ENCODE measurements at regions of chrX and their contacts with region 1.

Region 1: DNA sequence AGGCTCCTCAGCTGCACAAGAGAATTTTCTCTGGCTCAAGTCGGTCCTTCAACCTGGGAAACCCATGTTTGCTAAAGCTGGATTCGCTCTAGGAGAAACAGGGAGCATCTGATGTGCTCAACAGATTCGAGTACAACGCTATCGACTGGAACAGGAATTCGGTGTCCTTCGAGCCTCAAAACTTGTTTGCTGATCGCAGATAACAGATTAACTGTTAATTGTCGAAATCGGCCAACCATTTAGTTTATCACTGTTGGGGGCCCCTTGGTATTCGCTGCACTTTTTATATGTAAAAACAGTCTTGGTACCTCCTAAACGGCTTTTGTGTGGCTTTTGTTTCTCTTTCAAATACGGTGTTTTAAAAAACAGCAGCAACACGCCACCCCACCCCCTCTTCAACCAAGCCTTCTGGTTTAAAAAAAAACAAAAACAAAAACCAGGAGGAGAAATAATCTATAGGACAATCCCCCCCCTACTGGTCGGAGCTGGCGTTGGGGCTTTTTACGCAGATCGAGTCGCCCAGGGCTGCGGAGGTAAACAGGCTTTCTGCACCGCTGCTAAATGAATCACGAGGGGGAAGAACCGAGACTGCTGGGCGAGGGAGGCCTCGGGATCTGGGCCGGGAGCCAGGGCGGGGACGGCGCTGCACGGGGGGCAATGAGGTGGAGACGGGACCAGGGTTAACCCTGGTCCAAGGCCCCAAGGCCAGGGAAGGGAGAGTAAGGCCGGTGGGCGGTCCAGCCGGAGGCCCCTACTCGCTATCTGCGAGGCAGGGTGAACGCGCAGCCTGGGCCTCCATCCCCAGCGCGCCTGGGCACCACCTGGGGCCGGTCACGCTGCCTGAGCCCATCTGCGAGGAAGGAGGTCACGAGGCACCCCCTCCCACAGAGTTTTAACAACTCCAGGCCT is 71.7 kb upstream of the BCOR start:
- DNase-seq: peak; percentile 90
- H3K4me3 Mint-ChIP-seq: peak overlapping the region; percentile 90
- H3K27ac Mint-ChIP-seq: peak overlapping the region; percentile 100
- H3K4me1 Mint-ChIP-seq: peaks cover 37% of the 10 kb centered on the region
- H3K27me3 Mint-ChIP-seq: no peaks in the 10 kb centered on the region

Region 2: GRCh38 chrX:38803586-38804431 is 1365.6 kb before region 1 on chrX:
- CTCF ChIA-PET with region 1: no interaction called
- POLR2A ChIA-PET with region 1: interaction called, 5 read pairs
- intact Hi-C with region 1: loop called (anchors 5 kb)
- DNase-seq: peak; percentile 85
- H3K4me3 Mint-ChIP-seq: peak overlapping the region; percentile 96
- H3K27ac Mint-ChIP-seq: peak overlapping the region; percentile 94
- H3K4me1 Mint-ChIP-seq: peaks cover 7% of the 10 kb centered on the region
- H3K27me3 Mint-ChIP-seq: no peaks in the 10 kb centered on the region

Region 3: GRCh38 chrX:39874202-39874816 is 295.1 kb before region 1 on chrX:
- CTCF ChIA-PET with region 1: no interaction called
- POLR2A ChIA-PET with region 1: no interaction called
- intact Hi-C with region 1: loop called (anchors 5 kb)
- DNase-seq: peak; percentile 88
- H3K4me3 Mint-ChIP-seq: no peak overlapping the region
- H3K27ac Mint-ChIP-seq: peak overlapping the region; percentile 93
- H3K4me1 Mint-ChIP-seq: peaks cover 51% of the 10 kb centered on the region
- H3K27me3 Mint-ChIP-seq: peaks cover 4% of the 10 kb centered on the region

Region 4: DNA sequence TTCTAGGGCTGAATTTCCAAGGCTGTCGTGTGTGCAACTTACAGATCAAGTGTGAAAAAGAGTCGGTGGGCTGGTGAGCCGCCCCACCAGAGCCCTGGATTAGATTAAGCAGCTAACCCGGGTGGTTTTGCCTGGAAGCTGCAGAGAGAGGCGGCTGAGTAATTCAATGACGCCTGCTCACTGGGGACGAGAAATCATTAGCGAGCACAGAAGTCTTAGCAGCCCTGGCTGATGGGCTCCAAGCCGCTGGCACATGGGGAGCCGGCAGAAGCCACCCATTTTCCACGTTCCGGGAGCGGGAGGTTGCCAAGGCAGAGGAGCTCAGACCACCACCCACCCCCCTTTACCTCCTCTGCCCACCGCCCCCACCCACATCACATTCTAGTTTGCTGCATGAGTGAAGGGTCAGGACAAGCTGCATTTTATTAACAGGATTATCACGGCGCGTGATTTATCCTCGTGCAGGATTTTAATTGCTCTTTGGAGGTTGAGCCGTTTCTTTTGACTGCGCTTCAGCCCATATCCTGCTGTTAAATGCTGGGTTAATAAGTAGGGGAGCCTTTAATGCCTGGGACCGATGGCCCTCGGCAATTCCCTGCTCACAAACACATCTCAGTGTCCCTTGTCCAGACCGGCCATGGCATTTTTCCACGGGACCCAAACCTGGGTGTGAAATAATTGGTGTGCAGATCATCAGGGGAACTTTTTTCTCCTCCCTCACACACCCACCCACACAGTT is 90.8 kb before region 1 on chrX:
- CTCF ChIA-PET with region 1: no interaction called
- POLR2A ChIA-PET with region 1: no interaction called
- intact Hi-C with region 1: no loop called
- DNase-seq: no peak
- H3K4me3 Mint-ChIP-seq: no peak overlapping the region
- H3K27ac Mint-ChIP-seq: no peak overlapping the region
- H3K4me1 Mint-ChIP-seq: peaks cover 47% of the 10 kb centered on the region
- H3K27me3 Mint-ChIP-seq: no peaks in the 10 kb centered on the region

Region 5: DNA sequence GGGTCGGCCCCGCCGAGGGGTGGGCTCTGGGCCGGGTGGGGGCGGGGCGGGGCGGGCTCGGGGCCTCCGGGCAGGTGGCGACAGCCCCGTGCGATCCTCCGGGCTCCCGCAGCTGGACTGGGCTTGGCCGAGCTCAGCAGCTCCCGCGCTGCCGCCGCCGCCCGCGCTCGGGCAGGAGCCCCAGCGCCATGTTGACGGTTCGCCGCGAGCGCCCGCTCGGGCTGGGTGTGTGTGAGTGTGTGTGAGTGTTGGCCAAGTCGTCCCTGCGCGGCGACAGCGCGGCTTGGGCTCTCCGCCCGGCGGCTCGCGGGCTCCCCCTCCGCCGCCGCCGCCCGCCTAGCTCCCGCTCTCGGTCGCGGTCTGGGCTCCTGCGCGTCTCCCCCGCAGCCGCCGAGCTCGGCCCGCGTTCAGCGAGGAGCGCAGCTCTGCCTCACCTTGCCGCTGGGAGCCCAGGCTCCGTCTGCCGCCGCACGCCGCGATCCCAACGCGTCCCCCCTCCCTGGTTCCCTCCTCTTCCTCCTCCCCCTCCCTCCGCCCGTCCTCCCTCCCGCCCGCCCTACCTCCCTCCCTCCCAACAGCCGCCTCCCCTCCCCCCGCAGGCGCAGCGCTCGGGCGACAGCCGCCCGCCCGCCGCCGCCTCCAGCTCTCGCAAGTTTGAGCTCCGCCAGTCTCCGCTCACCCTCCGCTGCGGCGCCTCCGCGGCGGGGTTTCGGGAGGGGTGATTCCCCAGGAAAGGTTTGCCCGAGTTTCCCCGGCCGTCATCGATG is 71.8 kb before region 1 on chrX and contains the start of gene BCOR:
- CTCF ChIA-PET with region 1: interaction called, 8 read pairs
- POLR2A ChIA-PET with region 1: interaction called, 14 read pairs
- intact Hi-C with region 1: loop called (anchors 1 kb)
- DNase-seq: peak; percentile 82
- H3K4me3 Mint-ChIP-seq: peak within 1 kb of the TSS; percentile 81
- H3K27ac Mint-ChIP-seq: peak within 1 kb of the TSS; percentile 86
- H3K4me1 Mint-ChIP-seq: peaks cover 22% of the 10 kb centered on the region
- H3K27me3 Mint-ChIP-seq: no peaks in the 10 kb centered on the region
- total RNA-seq, gene BCOR: 33.7 to 35.0 TPM

Region 6: GRCh38 chrX:40266490-40267333 is 97.3 kb after region 1 on chrX:
- CTCF ChIA-PET with region 1: no interaction called
- POLR2A ChIA-PET with region 1: no interaction called
- intact Hi-C with region 1: loop called (anchors 5 kb)
- DNase-seq: peak; percentile 70
- H3K4me3 Mint-ChIP-seq: peak overlapping the region; percentile 70
- H3K27ac Mint-ChIP-seq: no peak overlapping the region
- H3K4me1 Mint-ChIP-seq: no peaks in the 10 kb centered on the region
- H3K27me3 Mint-ChIP-seq: no peaks in the 10 kb centered on the region

Measured in activated CD4-positive, alpha-beta memory T cell treated with anti-CD3 and anti-CD28 coated beads for 36 hours (primary cell).